Mammary epithelial cell (primary cell): ENCODE measurements at regions of chr4 and their contacts with region 1.

Region 1: DNA sequence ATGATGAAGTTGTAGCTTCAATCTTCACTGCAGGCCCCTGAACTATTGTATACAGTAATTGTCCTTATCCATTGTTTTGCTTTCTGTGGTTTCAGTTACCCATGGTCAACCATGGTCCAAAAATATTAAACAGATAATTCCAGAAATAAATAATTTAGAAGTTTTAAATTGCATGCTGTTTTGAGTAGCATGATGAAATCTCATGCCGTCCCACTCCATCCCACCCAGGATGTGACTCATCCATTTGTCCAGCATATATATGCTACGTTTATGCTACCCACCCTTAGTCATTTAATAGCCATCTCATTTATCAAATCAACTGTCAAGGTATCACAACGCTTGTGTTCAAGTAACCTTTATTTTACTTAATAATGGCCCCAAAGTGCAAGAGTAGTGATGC is 34.5 kb downstream of the IQCM start:
- DNase-seq: peak; percentile 73
- H3K4me3 ChIP-seq: no peak overlapping the region
- H3K27ac ChIP-seq: peak overlapping the region; percentile 60
- H3K4me1 ChIP-seq: peaks cover 28% of the 10 kb centered on the region
- H3K27me3 ChIP-seq: no peaks in the 10 kb centered on the region
- CTCF ChIP-seq: no peak

Region 2: GRCh38 chr4:149823770-149824221 is 42.6 kb after region 1 on chr4:
- CTCF ChIA-PET with region 1: no interaction called
- dilution Hi-C with region 1: no loop called
- in situ Hi-C with region 1: no loop called
- intact Hi-C with region 1: loop called (anchors 5 kb)
- DNase-seq: peak; percentile 76
- H3K4me3 ChIP-seq: no peak overlapping the region
- H3K27ac ChIP-seq: peak overlapping the region; percentile 70
- H3K4me1 ChIP-seq: peaks cover 8% of the 10 kb centered on the region
- H3K27me3 ChIP-seq: no peaks in the 10 kb centered on the region
- CTCF ChIP-seq: no peak